ENCODE measurements at regions of chr6 and their contacts with region 1.

Region 1: GRCh38 chr6:170295510-170296422 is 4.9 kb upstream of the DLL1 start:
- DNase-seq: peak in 1 of 2 donors; percentile 42
- ATAC-seq: peak in 1 of 8 donors; percentile 42
- H3K4me3 ChIP-seq: peak overlapping the region; percentile 40 to 62 (median 55)
- H3K27ac ChIP-seq: peak overlapping the region in 1 of 10 donors; percentile 15
- H3K4me1 ChIP-seq: peaks cover 24 to 52% (median 39%) of the 10 kb centered on the region in 9 donors
- H3K27me3 ChIP-seq: peaks cover 11 to 96% (median 34%) of the 10 kb centered on the region in 7 donors
- CTCF ChIP-seq: no peak

Region 2: GRCh38 chr6:169959136-169960002 is 336.4 kb before region 1 on chr6:
- intact Hi-C with region 1: loop called in 6 of 10 experiments (anchors 5 to 10 kb)
- DNase-seq: peak in 1 of 2 donors; percentile 14
- ATAC-seq: peak in 5 of 8 donors; percentile 30 to 56 (median 49)
- H3K4me3 ChIP-seq: peak overlapping the region in 2 of 10 donors; percentile 8 to 21
- H3K27ac ChIP-seq: no peak overlapping the region
- H3K4me1 ChIP-seq: peaks cover 0 to 29% (median 9%) of the 10 kb centered on the region in 9 donors
- H3K27me3 ChIP-seq: peaks cover 0 to 31% (median 17%) of the 10 kb centered on the region in 7 donors
- CTCF ChIP-seq: no peak

Region 3: GRCh38 chr6:170024952-170025911 is 270.5 kb before region 1 on chr6:
- intact Hi-C with region 1: loop called in 2 of 10 experiments (anchors 5 to 10 kb)
- DNase-seq: peak in 1 of 2 donors; percentile 42
- ATAC-seq: peak in 4 of 8 donors; percentile 13 to 78 (median 64)
- H3K4me3 ChIP-seq: no peak overlapping the region
- H3K27ac ChIP-seq: no peak overlapping the region
- H3K4me1 ChIP-seq: peaks cover 0 to 20% (median 7%) of the 10 kb centered on the region in 9 donors
- H3K27me3 ChIP-seq: peaks cover 0 to 16% (median 12%) of the 10 kb centered on the region in 7 donors
- CTCF ChIP-seq: no peak

Region 4: GRCh38 chr6:170152989-170153388 is 142.8 kb before region 1 on chr6:
- intact Hi-C with region 1: loop called in 2 of 10 experiments (anchors 5 kb)
- DNase-seq: no peak
- ATAC-seq: peak in 5 of 8 donors; percentile 13 to 48 (median 35)
- H3K4me3 ChIP-seq: peak overlapping the region in 4 of 10 donors; percentile 5 to 33 (median 20)
- H3K27ac ChIP-seq: peak overlapping the region; percentile 76 to 94 (median 85)
- H3K4me1 ChIP-seq: peaks cover 5 to 40% (median 29%) of the 10 kb centered on the region in 9 donors
- H3K27me3 ChIP-seq: peaks cover 0 to 26% (median 0%) of the 10 kb centered on the region in 7 donors
- CTCF ChIP-seq: no peak

Region 5: GRCh38 chr6:170516783-170517616 is 221.2 kb after region 1 on chr6:
- intact Hi-C with region 1: loop called in 4 of 10 experiments (anchors 5 to 10 kb)
- DNase-seq: peak in 1 of 2 donors; percentile 15
- ATAC-seq: peak in 7 of 8 donors; percentile 39 to 81 (median 61)
- H3K4me3 ChIP-seq: no peak overlapping the region
- H3K27ac ChIP-seq: no peak overlapping the region
- H3K4me1 ChIP-seq: peaks cover 0 to 3% (median 1%) of the 10 kb centered on the region in 9 donors
- H3K27me3 ChIP-seq: peaks cover 0 to 4% (median 0%) of the 10 kb centered on the region in 7 donors
- CTCF ChIP-seq: peak; percentile 50 to 82 (median 70)